GM13977 (cell line): ENCODE measurements at regions of chr6 and their contacts with region 1.

Region 1: DNA sequence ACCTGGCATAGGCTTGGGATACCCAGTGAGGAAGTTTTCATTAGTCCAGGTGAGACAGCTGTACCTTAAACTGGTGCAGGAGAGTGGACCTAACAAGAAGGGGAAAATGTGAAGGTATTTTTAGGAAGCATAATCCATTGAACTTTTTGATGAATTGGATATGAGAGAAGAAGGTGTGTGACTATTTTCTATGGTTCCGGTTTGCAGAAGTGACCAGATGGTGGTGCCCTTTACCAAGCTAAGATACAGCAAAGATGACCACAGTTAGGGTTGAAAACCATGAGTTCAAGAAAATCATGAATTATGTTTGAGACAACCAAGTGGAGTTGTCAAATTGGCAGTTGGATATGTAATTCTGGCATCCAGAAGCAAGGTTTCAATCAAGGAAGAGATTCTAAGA is 61.9 kb upstream of the NRSN1 start:
- DNase-seq: no peak
- CTCF ChIP-seq: peak; percentile 59

Region 2: GRCh38 chr6:24274441-24275083 is 210.5 kb after region 1 on chr6:
- in situ Hi-C with region 1: loop called (anchors 25 kb)
- DNase-seq: peak; percentile 18
- CTCF ChIP-seq: peak; percentile 57